H1 (cell line): ENCODE measurements at regions of chr11 and their contacts with region 1.

Region 1: DNA sequence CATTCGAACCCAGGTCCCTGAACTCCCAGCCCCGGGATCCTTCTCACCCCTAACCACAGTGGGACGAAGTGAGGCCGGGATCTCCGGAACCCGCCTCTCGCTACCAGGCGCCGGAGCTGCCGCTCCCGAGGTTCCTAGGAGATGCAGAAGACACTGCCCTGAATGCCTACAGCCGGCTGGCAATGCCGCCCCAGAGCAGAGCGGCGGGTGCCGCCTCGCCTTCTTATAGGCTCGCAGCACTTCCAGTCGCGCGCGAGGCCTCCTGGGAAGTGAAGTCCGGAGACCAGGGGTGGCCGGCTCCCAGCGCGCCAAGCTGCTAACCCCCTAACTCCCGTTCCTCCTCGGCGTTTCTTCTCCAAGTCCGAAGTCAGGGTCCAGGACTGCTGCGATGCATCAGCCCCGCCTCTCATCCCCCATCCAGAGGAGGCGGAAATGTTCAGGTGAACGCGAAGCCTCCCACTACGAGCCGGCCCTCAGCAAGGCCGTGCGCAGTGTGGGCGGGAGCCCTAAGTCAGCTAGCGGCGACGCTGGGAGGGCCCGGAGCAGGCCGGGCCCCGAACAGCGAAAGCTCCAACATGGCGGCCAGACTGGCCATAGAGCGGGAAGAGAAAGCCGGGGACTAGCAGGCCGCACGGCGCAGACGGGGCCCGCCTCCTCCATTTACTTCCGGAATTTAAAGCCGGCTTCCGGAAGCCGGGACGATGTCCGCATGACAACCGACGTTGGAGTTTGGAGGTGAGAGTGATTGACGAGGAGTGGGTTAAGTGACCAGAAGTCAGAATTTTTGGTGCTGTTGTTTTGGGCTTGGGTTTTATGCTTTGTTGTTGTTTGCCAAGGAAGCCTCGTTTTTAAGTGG is at the starts of genes CYB561A3 and TMEM138:
- DNase-seq: peak; percentile 78 to 90
- H3K4me3 ChIP-seq: peak within 1 kb of the TSS; percentile 77 to 100 (median 86)
- H3K27ac ChIP-seq: peak within 1 kb of the TSS; percentile 100
- H3K4me1 ChIP-seq: no peaks in the 10 kb centered on the region
- H3K27me3 ChIP-seq: no peaks in the 10 kb centered on the region
- CTCF ChIP-seq: peak in 1 of 3 experiments; percentile 1; a peak in 1 of 4 replicates
- EP300 ChIP-seq: no peak
- POLR2A ChIP-seq: peak; percentile 94 to 99
- RAD21 ChIP-seq: no peak
- total RNA-seq, gene CYB561A3: 29.6 and 32.5 TPM in 2 replicates
- total RNA-seq, gene TMEM138: 32.9 and 35.3 TPM in 2 replicates

Region 2: GRCh38 chr11:61294717-61295595 is 67.0 kb before region 1 on chr11 and contains the start of gene VWCE:
- CTCF ChIA-PET with region 1: interaction called, 3 read pairs
- POLR2A ChIA-PET with region 1: interaction called, 35 read pairs
- DNase-seq: peak; percentile 53 to 86
- H3K4me3 ChIP-seq: peak within 1 kb of the TSS; percentile 54 to 82 (median 78)
- H3K27ac ChIP-seq: peak within 1 kb of the TSS; percentile 57
- H3K4me1 ChIP-seq: peaks cover 2 to 9% (median 8%) of the 10 kb centered on the region in 4 experiments
- H3K27me3 ChIP-seq: peaks cover 1 to 12% (median 7%) of the 10 kb centered on the region in 4 experiments; a peak in 6 of 7 replicates
- CTCF ChIP-seq: 0 out of 4 replicates have a peak, but pooled peaks of 1 of the 3 experiments have one; percentile 10
- EP300 ChIP-seq: no peak
- POLR2A ChIP-seq: peak in 1 of 2 experiments; percentile 26; a peak in 2 of 3 replicates
- RAD21 ChIP-seq: no peak; a peak in 1 of 4 replicates
- total RNA-seq, gene VWCE: 12.3 and 14.5 TPM in 2 replicates

Region 3: GRCh38 chr11:61332797-61333549 is 28.9 kb before region 1 on chr11 and contains the starts of genes DDB1 and TKFC:
- CTCF ChIA-PET with region 1: interaction called, 255 read pairs
- POLR2A ChIA-PET with region 1: interaction called, 1,106 read pairs
- DNase-seq: peak; percentile 84 to 99
- H3K4me3 ChIP-seq: peak within 1 kb of the TSS; percentile 79 to 96 (median 92)
- H3K27ac ChIP-seq: peak within 1 kb of the TSS; percentile 96
- H3K4me1 ChIP-seq: peaks cover 5 to 14% (median 9%) of the 10 kb centered on the region in 4 experiments
- H3K27me3 ChIP-seq: no peaks in the 10 kb centered on the region
- CTCF ChIP-seq: no peak
- EP300 ChIP-seq: no peak
- POLR2A ChIP-seq: peak; percentile 94 to 96
- RAD21 ChIP-seq: no peak
- total RNA-seq, gene DDB1: 275 and 283 TPM in 2 replicates
- total RNA-seq, gene TKFC: 53.5 and 56.0 TPM in 2 replicates

Region 4: GRCh38 chr11:61392981-61393595 is 31.2 kb after region 1 on chr11:
- CTCF ChIA-PET with region 1: interaction called, 5 read pairs
- POLR2A ChIA-PET with region 1: interaction called, 1,106 read pairs
- DNase-seq: no peak
- H3K4me3 ChIP-seq: peak overlapping the region; percentile 76 to 98 (median 83)
- H3K27ac ChIP-seq: no peak overlapping the region
- H3K4me1 ChIP-seq: peaks cover 0 to 2% (median 0%) of the 10 kb centered on the region in 4 experiments; a peak in 2 of 7 replicates
- H3K27me3 ChIP-seq: no peaks in the 10 kb centered on the region
- CTCF ChIP-seq: peak in 1 of 3 experiments; percentile 12; a peak in 1 of 4 replicates
- EP300 ChIP-seq: no peak
- POLR2A ChIP-seq: no peak
- RAD21 ChIP-seq: peak; percentile 18; a peak in 2 of 4 replicates

Region 5: DNA sequence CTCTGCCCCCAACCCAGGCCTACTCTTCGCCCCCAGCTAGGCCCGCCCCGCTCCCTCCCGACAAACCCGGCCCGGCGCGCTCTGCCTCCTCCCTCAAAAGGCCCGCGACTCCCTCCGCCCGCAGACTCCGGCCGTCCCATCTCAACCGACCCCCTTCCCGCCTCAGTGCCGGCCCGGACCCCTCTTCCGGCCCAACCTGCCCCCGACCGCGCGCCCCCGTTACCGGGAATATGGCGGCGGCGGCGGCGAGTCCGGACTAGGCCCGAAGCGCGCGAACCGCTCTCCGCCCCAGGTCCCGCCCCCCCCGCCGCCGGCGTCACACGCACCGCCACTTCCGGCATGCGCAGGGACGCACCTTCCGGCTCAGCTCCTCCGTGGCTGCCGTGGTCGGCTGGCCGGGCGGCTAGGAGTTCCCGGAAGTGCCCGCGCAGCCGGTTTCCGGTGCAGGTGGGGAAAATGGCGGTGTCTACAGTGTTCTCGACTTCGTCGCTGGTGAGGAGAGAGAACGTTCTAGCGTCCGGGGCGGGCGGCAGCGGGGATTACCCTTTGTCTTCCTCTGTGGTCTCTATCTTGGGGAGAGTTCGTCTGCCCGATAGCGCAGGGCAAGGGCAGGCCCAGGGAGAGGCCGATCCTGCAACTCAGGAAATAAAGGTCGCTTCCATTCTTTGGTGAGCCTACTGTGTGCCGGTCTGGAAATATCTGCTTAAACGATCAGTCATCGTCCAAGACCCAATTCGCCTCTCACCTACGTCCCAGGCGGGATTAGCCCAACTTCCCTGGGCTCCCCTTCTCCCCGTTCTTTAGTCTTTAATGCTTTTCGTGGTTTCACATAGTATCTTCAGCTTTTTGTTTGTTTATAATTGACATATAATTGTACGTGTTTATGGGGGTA is 68.0 kb after region 1 on chr11 and contains the starts of genes CPSF7 and SDHAF2:
- CTCF ChIA-PET with region 1: interaction called, 3 read pairs
- POLR2A ChIA-PET with region 1: interaction called, 70 read pairs
- DNase-seq: peak; percentile 82 to 98
- H3K4me3 ChIP-seq: peak within 1 kb of the TSS; percentile 76 to 94 (median 89)
- H3K27ac ChIP-seq: peak within 1 kb of the TSS; percentile 97
- H3K4me1 ChIP-seq: no peaks in the 10 kb centered on the region; a peak in 1 of 7 replicates
- H3K27me3 ChIP-seq: no peaks in the 10 kb centered on the region
- CTCF ChIP-seq: no peak
- EP300 ChIP-seq: 0 out of 3 replicates have a peak, but pooled peaks of 1 of the 2 experiments have one; percentile 24
- POLR2A ChIP-seq: peak; percentile 78 to 91
- RAD21 ChIP-seq: no peak
- total RNA-seq, gene CPSF7: 95.9 and 96.7 TPM in 2 replicates
- total RNA-seq, gene SDHAF2: 41.0 and 44.8 TPM in 2 replicates